ENCODE measurements at regions of chr14 and their contacts with region 1.

Region 1: GRCh38 chr14:36661756-36662498 is at the start of gene PAX9:
- DNase-seq: peak; percentile 92 to 94 (median 93)
- ATAC-seq: peak; percentile 100
- H3K4me3 ChIP-seq: peak within 1 kb of the TSS; percentile 73
- H3K27ac ChIP-seq: peak within 1 kb of the TSS; percentile 71
- H3K4me1 ChIP-seq: peaks cover 0 to 21% of the 10 kb centered on the region in 2 experiments; a peak in 2 of 5 replicates
- H3K27me3 ChIP-seq: no peaks in the 10 kb centered on the region
- CTCF ChIP-seq: no peak
- EP300 ChIP-seq: no peak
- POLR2A ChIP-seq: peak; percentile 70; the same call in 1 of the 2 replicates
- RAD21 ChIP-seq: no peak
- polyA plus RNA-seq, gene PAX9: 1.2 to 2.2 TPM

Region 2: DNA sequence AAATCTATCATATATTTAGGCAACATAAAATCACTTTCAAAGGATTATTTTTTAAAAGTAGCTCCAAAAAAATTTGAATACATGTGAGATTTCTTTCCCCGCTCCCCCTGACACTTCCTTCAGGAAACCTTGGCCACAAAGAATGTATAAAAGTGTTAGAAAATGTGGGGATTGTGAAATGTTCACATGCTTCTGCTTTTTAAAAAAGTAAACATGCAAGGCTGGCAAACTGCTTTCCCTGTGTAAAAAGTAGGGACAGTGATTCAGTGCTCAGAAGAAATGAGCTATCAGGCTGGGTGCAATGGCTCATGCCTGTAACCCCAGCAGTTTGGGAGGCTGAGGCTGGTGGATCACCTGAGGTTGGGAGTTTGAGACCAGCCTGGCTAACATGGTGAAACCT is 368.1 kb before region 1 on chr14:
- CTCF ChIA-PET with region 1: no interaction called
- POLR2A ChIA-PET with region 1: no interaction called
- in situ Hi-C with region 1: no loop called
- intact Hi-C with region 1: no loop called
- DNase-seq: no peak
- ATAC-seq: no peak
- H3K4me3 ChIP-seq: no peak overlapping the region
- H3K27ac ChIP-seq: no peak overlapping the region
- H3K4me1 ChIP-seq: no peaks in the 10 kb centered on the region; a peak in 1 of 5 replicates
- H3K27me3 ChIP-seq: no peaks in the 10 kb centered on the region
- CTCF ChIP-seq: no peak
- EP300 ChIP-seq: no peak
- POLR2A ChIP-seq: no peak
- RAD21 ChIP-seq: no peak

Region 3: DNA sequence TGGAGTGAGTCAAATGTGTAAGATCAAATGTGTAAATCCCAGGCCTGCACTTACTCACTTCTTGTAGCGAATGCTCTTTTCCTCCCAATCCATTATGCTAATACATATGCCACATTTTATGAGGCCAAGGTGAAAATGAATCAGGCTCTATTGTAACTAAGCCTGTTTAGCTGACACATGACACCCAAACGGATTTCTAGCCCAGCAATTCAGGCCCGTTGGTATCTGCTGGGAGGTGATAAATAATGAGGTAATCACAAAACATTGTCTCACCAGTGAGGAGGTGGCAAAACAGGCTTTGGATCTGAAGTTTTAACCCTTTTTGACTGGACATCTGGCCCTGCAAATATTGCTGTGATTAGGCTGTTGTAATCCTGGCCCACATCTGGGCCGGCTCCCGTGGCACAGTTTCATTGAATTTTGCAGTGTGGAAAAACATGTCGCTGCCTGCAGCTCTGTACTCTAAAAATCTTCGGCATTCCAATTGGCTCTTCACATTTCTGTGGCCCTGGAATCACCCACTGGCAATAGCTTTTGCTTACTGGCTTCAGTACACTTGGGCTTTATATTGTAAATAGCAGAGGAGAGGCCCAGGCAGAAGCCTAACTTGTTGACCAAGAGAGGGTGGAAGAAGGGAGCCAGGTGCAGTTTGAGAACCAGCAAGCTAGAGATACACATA is 105.8 kb after region 1 on chr14:
- CTCF ChIA-PET with region 1: no interaction called
- POLR2A ChIA-PET with region 1: no interaction called
- in situ Hi-C with region 1: no loop called
- intact Hi-C with region 1: loop called (anchors 10 kb)
- DNase-seq: peak; percentile 8 to 50 (median 17)
- ATAC-seq: peak; percentile 85
- H3K4me3 ChIP-seq: no peak overlapping the region
- H3K27ac ChIP-seq: peak overlapping the region; percentile 34; the same call in 2 of the 3 replicates
- H3K4me1 ChIP-seq: peaks cover 0 to 16% of the 10 kb centered on the region in 2 experiments; a peak in 4 of 5 replicates
- H3K27me3 ChIP-seq: no peaks in the 10 kb centered on the region
- CTCF ChIP-seq: no peak
- EP300 ChIP-seq: peak; percentile 82; the same call in 1 of the 2 replicates
- POLR2A ChIP-seq: no peak
- RAD21 ChIP-seq: no peak